Activated CD8-positive, alpha-beta memory T cell treated with anti-CD3 and anti-CD28 coated beads, Interleukin-2, amount 10 ng/mL, durations not matched to agents 7 days and 5 days (primary cell): ENCODE measurements at regions of chr18 and their contacts with region 1.

Region 1: DNA sequence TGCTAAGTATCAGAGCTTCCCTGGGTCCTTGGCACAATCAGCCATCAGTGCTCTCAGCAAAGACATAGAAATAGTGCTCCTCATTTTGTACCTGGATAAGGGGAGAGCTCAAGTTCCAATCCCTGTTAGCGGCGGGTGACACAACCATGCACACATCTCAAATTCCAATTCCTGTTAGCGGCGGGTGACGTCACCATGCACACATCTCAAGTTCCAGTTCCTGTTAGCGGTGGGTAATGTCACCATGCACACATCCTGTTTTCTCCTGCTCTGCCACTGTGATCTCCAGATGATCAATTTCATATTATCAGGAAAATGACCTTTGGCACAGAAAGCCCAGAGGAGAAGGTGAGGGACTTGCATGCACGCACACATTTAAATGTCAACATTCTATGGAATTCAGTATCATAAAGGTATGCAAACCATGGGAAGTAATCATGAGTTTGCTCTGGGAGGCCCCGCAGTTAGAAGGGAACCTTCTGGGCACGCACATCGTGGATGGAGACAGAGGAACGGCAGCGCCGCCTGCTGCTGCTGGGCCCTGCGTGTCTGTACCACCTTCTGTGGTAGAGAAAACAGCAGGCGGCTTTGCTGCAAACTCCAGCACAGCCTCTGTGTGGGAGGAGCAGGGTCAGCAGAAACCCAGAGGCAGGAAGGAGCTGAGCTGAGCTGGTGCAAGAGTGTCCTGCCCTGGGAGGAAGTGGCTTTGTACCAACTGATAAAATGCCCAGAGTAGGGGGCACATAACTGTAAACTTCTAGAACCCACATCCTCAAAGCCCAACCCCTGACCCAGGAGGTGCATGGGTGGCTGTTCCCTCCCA is 77.8 kb downstream of the MBP start:
- DNase-seq: peak; percentile 95
- ATAC-seq: peak; percentile 88
- H3K4me3 Mint-ChIP-seq: peak overlapping the region; percentile 72
- H3K27ac Mint-ChIP-seq: peak overlapping the region; percentile 91
- H3K4me1 Mint-ChIP-seq: peaks cover 64% of the 10 kb centered on the region
- H3K27me3 Mint-ChIP-seq: no peaks in the 10 kb centered on the region

Region 2: DNA sequence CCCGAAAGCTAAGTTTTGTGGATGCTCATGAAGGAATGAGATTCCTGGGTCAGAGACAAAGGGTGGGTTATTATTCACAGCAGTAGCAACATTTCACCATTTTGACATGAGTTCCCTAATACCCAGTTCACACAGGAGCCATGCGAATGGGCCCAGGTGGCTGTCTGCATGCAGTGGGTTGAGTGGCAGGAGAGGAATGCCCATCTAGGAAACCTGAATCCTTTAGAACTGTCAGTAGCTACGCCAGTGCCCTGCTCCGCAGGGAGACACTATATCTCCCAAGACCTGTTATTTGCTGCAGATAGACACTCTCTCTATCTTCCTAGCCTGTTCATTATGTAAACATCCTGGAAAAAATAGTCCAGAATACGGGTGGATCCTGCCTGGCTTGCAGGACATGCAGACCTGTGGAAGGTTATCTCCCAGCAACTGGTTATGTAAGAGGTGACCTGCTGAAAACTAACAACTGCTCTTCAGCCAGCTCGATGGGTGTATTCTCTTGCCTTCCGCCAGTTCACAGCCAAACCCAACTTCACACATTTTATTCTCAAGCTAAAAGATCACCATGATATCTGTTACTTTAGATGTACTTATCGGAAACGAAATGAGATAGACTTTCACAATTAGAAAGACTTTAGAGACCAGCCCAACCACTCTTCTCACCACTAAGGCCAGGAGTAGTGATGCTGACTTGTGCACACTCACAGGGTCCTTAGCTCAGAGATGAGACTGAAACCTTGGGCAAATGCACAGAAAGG is 18.7 kb after region 1 on chr18:
- CTCF ChIA-PET with region 1: interaction called, 40 read pairs
- DNase-seq: peak; percentile 86
- ATAC-seq: peak; percentile 87
- H3K4me3 Mint-ChIP-seq: peak overlapping the region; percentile 15
- H3K27ac Mint-ChIP-seq: peak overlapping the region; percentile 78
- H3K4me1 Mint-ChIP-seq: peaks cover 89% of the 10 kb centered on the region
- H3K27me3 Mint-ChIP-seq: no peaks in the 10 kb centered on the region

Region 3: GRCh38 chr18:77086034-77086433 is 31.2 kb after region 1 on chr18:
- CTCF ChIA-PET with region 1: no interaction called
- DNase-seq: no peak
- ATAC-seq: no peak
- H3K4me3 Mint-ChIP-seq: no peak overlapping the region
- H3K27ac Mint-ChIP-seq: peak overlapping the region; percentile 51
- H3K4me1 Mint-ChIP-seq: peaks cover 59% of the 10 kb centered on the region
- H3K27me3 Mint-ChIP-seq: no peaks in the 10 kb centered on the region